Lower leg skin (tissue), 4 donors: ENCODE measurements at regions of chr22 and their contacts with region 1.

Region 1: GRCh38 chr22:28514321-28514821 is 165.3 kb downstream of the TTC28 start:
- DNase-seq: no peak
- H3K4me3 ChIP-seq: no peak overlapping the region
- CTCF ChIP-seq: no peak
- POLR2A ChIP-seq: no peak

Region 2: GRCh38 chr22:28484662-28485061 is 29.7 kb before region 1 on chr22:
- intact Hi-C with region 1: loop called (anchors 1 kb)
- DNase-seq: no peak
- H3K4me3 ChIP-seq: no peak overlapping the region
- CTCF ChIP-seq: no peak
- POLR2A ChIP-seq: no peak

Region 3: GRCh38 chr22:28629420-28630176 is 115.2 kb after region 1 on chr22:
- intact Hi-C with region 1: no loop called
- DNase-seq: no peak
- H3K4me3 ChIP-seq: no peak overlapping the region
- CTCF ChIP-seq: no peak
- POLR2A ChIP-seq: no peak